Aorta (tissue), 5 donors: ENCODE measurements at regions of chr2 and their contacts with region 1.

Region 1: DNA sequence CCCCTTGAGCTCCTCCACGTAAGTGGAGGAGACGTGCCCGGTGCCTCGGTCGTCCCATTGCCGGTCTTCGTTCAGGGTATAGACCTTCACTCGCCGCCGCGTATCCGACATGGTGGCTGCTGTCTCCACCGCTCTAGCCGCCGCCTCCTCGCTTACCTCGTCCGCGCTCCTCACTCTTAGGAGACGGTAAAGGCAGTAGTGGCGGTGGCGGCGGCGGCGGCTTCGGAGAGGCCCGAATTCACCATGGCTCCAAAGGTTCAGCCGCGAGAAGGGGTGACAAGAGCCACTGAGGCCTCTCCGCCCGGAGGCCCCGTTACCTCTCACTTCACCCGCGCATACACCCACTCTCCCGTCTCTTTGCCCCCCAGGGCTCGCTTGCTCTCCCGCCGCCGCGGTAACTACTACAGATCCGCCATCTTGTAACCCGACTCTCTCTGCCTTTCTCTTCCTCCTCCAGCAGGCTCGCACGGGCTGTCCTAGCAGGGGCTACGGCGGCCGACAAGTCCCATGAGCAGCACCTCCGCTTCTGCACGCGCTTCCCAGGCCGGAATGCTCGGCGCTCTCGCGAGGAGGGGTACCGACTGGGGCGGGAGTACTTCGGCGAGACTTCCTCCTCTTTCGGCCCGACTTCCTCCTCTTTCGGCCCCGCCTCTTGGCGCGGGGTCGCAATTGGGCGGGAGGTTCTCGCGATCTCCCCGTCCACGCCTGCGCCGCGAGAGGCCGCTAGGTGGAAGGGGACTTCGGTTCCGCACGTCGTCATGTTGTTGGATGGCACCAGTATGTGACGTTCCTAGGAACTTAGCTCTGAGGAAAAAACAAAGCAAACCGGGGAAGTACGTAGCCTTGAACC is at the start of gene PPP4R3B:
- DNase-seq: peak; percentile 100
- ATAC-seq: peak; percentile 100
- H3K4me3 ChIP-seq: peak within 1 kb of the TSS; percentile 97 to 100
- H3K27ac ChIP-seq: peak within 1 kb of the TSS; percentile 93 to 95
- H3K4me1 ChIP-seq: peaks cover 0 to 4% of the 10 kb centered on the region in 2 donors
- H3K27me3 ChIP-seq: no peaks in the 10 kb centered on the region
- total RNA-seq, gene PPP4R3B: 57.6 to 59.3 TPM

Region 2: GRCh38 chr2:54503192-54503591 is 1114.2 kb before region 1 on chr2:
- intact Hi-C with region 1: no loop called
- DNase-seq: no peak
- ATAC-seq: peak; percentile 52
- H3K4me3 ChIP-seq: no peak overlapping the region
- H3K27ac ChIP-seq: no peak overlapping the region
- H3K4me1 ChIP-seq: peaks cover 0 to 5% of the 10 kb centered on the region in 2 donors
- H3K27me3 ChIP-seq: no peaks in the 10 kb centered on the region

Region 3: GRCh38 chr2:55519938-55520885 is 97.2 kb before region 1 on chr2:
- intact Hi-C with region 1: loop called in 1 of 2 experiments (anchors 1 kb)
- DNase-seq: no peak
- ATAC-seq: peak; percentile 49
- H3K4me3 ChIP-seq: peak overlapping the region; percentile 67 to 91
- H3K27ac ChIP-seq: peak overlapping the region in 1 of 2 donors; percentile 85
- H3K4me1 ChIP-seq: no peaks in the 10 kb centered on the region
- H3K27me3 ChIP-seq: no peaks in the 10 kb centered on the region

Region 4: DNA sequence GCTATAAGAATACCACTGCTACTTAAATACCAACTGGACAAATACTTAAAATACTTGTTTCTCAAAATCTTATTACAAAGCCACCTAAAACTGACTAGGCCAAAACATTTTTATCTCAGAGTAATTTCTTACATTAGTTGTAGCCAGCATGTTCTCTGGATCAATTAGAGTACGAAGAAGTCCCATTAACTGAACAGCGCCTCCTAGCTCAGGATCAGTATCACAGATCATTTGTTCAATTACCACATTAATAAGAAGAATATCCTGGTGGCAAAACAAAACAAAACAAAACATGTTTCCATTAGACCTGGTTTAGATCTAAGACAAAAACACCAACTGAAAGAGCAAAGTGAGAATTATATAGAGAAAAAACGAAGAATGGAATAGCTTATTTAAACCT is 36.0 kb before region 1 on chr2:
- intact Hi-C with region 1: loop called in 1 of 2 experiments (anchors 5 kb)
- DNase-seq: no peak
- ATAC-seq: no peak
- H3K4me3 ChIP-seq: no peak overlapping the region
- H3K27ac ChIP-seq: no peak overlapping the region
- H3K4me1 ChIP-seq: no peaks in the 10 kb centered on the region
- H3K27me3 ChIP-seq: no peaks in the 10 kb centered on the region

Region 5: GRCh38 chr2:55733335-55733734 is 115.9 kb after region 1 on chr2:
- intact Hi-C with region 1: no loop called
- DNase-seq: no peak
- ATAC-seq: no peak
- H3K4me3 ChIP-seq: no peak overlapping the region
- H3K27ac ChIP-seq: no peak overlapping the region
- H3K4me1 ChIP-seq: no peaks in the 10 kb centered on the region
- H3K27me3 ChIP-seq: no peaks in the 10 kb centered on the region